Caco-2 (cell line): ENCODE measurements at regions of chr11 and their contacts with region 1.

Region 1: GRCh38 chr11:87421422-87421821 is 383.7 kb downstream of the TMEM135 start:
- DNase-seq: peak; percentile 73 to 81
- H3K4me3 ChIP-seq: no peak overlapping the region
- H3K4me3 Mint-ChIP-seq: no peak overlapping the region
- H3K27ac Mint-ChIP-seq: no peak overlapping the region
- H3K4me1 ChIP-seq: no peaks in the 10 kb centered on the region
- H3K4me1 Mint-ChIP-seq: no peaks in the 10 kb centered on the region
- H3K27me3 ChIP-seq: no peaks in the 10 kb centered on the region
- H3K27me3 Mint-ChIP-seq: no peaks in the 10 kb centered on the region
- CTCF ChIP-seq: peak; percentile 85 to 91

Region 2: DNA sequence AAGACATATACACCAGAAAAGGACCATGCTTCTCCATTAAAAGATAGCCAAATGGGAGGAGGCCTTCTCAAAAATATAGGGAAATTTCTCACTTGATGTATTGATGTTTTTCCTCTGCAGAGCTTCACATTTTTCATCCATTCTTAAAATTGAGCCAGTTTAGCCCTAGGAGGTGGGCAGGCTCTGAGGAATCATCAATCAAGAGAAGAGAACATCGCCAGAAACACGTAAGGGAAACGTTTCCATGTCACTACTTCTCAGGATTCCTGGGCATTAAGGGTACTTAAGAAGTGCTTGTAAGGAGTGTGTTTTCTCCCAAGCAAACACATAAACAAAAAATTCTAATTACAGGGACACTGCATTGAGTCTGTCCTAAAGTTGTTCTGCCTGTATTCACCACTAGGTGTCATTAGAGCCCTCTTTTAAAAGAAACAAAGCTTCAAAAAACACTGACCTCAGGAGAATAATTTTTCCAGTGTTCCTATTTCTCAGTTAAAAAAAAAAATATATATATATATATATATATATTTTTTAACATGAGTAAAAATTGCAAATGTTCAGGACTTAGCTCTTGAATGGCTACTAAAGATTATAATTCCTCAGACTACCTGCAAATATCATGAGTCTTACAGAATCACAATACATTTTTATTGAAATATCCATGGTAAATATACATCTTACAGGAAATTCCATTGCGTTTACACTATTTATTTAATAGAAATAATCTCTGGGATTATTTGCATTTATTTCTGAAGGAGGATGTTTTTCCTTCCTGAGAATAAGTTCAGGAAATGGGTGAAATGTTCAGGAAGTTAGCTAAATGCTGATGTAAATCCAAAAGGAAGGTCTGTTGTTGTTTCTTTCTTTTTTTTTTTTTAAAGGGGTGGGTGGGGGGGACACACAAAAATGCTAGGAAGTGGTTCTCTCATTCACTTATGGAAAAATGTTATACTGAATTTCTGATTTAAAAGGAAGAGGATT is 482.2 kb before region 1 on chr11:
- CTCF ChIA-PET with region 1: interaction called, 21 read pairs
- POLR2A ChIA-PET with region 1: no interaction called
- intact Hi-C with region 1: loop called (anchors 1 kb)
- DNase-seq: peak in 1 of 2 experiments; percentile 75
- H3K4me3 ChIP-seq: no peak overlapping the region
- H3K4me3 Mint-ChIP-seq: peak overlapping the region; percentile 60
- H3K27ac Mint-ChIP-seq: peak overlapping the region; percentile 84
- H3K4me1 ChIP-seq: peaks cover 51% of the 10 kb centered on the region
- H3K4me1 Mint-ChIP-seq: peaks cover 52% of the 10 kb centered on the region
- H3K27me3 ChIP-seq: no peaks in the 10 kb centered on the region
- H3K27me3 Mint-ChIP-seq: no peaks in the 10 kb centered on the region
- CTCF ChIP-seq: peak; percentile 79 to 83

Region 3: DNA sequence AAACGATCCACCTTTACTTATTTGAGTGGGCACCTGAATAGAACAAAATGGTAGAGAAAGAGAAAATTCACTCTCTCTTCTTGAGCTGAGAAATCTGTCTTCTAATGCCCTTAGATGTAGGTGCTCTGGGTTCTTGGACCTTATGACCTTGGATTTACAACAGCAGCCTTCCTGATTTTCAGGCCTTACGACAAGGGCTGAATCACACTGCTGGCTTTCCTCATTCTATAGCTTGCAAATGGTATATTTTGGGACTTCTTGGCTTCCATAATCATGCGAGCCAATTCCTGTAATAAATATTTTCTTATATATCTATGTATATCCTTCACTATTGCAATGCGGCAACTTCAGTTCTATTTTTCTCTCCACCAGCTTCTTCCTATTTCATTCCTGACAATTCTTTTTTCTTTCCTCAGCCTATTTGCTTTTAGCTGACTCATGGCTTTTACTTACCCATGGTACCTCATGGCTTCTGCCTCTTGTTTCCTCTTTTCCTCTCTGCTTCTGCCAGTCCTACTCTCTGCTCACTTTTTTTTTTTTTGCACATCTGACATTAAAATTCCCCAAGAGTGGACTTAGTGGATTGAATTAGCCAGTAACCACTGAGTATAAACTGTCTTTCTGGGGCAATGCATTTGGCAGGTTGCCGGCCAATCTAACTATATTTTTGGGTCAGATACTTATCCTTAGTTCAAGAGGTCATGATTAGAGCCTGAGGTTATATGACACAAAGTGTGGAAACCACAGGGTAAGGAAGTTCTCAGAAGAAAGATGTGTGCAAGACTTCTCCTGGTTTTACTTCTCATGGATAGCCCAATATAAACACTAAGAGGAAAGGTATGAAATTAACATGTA is 24.2 kb before region 1 on chr11:
- CTCF ChIA-PET with region 1: interaction called, 4 read pairs
- POLR2A ChIA-PET with region 1: no interaction called
- intact Hi-C with region 1: loop called (anchors 2 kb)
- DNase-seq: no peak
- H3K4me3 ChIP-seq: no peak overlapping the region
- H3K4me3 Mint-ChIP-seq: no peak overlapping the region
- H3K27ac Mint-ChIP-seq: no peak overlapping the region
- H3K4me1 ChIP-seq: no peaks in the 10 kb centered on the region
- H3K4me1 Mint-ChIP-seq: peaks cover 6% of the 10 kb centered on the region
- H3K27me3 ChIP-seq: no peaks in the 10 kb centered on the region
- H3K27me3 Mint-ChIP-seq: peaks cover 5% of the 10 kb centered on the region
- CTCF ChIP-seq: no peak